ENCODE measurements at regions of chr17 and their contacts with region 1.

Region 1: GRCh38 chr17:58631523-58632323 is 60.1 kb downstream of the TEX14 start:
- DNase-seq: peak; percentile 100
- ATAC-seq: peak; percentile 95
- H3K4me3 ChIP-seq: peak overlapping the region; percentile 64
- H3K27ac ChIP-seq: peak overlapping the region; percentile 78
- H3K4me1 ChIP-seq: peaks cover 13% of the 10 kb centered on the region
- H3K27me3 ChIP-seq: no peaks in the 10 kb centered on the region
- CTCF ChIP-seq: peak; percentile 30; the same call in 1 of the 2 replicates

Region 2: GRCh38 chr17:58587702-58588254 is 43.9 kb before region 1 on chr17:
- CTCF ChIA-PET with region 1: interaction called, 14 read pairs
- POLR2A ChIA-PET with region 1: interaction called, 8 read pairs
- intact Hi-C with region 1: loop called (anchors 1 kb)
- DNase-seq: peak; percentile 84
- ATAC-seq: peak; percentile 97
- H3K4me3 ChIP-seq: no peak overlapping the region
- H3K27ac ChIP-seq: no peak overlapping the region
- H3K4me1 ChIP-seq: no peaks in the 10 kb centered on the region
- H3K27me3 ChIP-seq: 0 out of 2 replicates have a peak, but pooled peaks cover 4% of the 10 kb centered on the region
- CTCF ChIP-seq: peak; percentile 98

Region 3: GRCh38 chr17:58658804-58659713 is 27.3 kb after region 1 on chr17:
- CTCF ChIA-PET with region 1: no interaction called
- POLR2A ChIA-PET with region 1: interaction called, 19 read pairs
- intact Hi-C with region 1: loop called (anchors 1 kb)
- DNase-seq: peak; percentile 98
- ATAC-seq: peak; percentile 91
- H3K4me3 ChIP-seq: peak overlapping the region; percentile 56
- H3K27ac ChIP-seq: peak overlapping the region; percentile 89
- H3K4me1 ChIP-seq: 0 out of 2 replicates have a peak, but pooled peaks cover 8% of the 10 kb centered on the region
- H3K27me3 ChIP-seq: no peaks in the 10 kb centered on the region
- CTCF ChIP-seq: no peak

Region 4: GRCh38 chr17:58692239-58693055 is 60.7 kb after region 1 on chr17 and contains the start of gene RAD51C:
- CTCF ChIA-PET with region 1: no interaction called
- POLR2A ChIA-PET with region 1: no interaction called
- intact Hi-C with region 1: loop called (anchors 5 kb)
- DNase-seq: peak; percentile 94
- ATAC-seq: peak; percentile 99
- H3K4me3 ChIP-seq: peak within 1 kb of the TSS; percentile 76
- H3K27ac ChIP-seq: peak within 1 kb of the TSS; percentile 46
- H3K4me1 ChIP-seq: peaks cover 23% of the 10 kb centered on the region
- H3K27me3 ChIP-seq: no peaks in the 10 kb centered on the region
- CTCF ChIP-seq: no peak
- total RNA-seq, gene RAD51C: 58.9 and 71.1 TPM in 2 replicates

Region 5: GRCh38 chr17:58997756-58998550 is 366.2 kb after region 1 on chr17:
- CTCF ChIA-PET with region 1: no interaction called
- POLR2A ChIA-PET with region 1: interaction called, 3 read pairs
- intact Hi-C with region 1: loop called (anchors 2 kb)
- DNase-seq: peak; percentile 47
- ATAC-seq: peak; percentile 77
- H3K4me3 ChIP-seq: no peak overlapping the region
- H3K27ac ChIP-seq: peak overlapping the region; percentile 15; the same call in 1 of the 2 replicates
- H3K4me1 ChIP-seq: peaks cover 22% of the 10 kb centered on the region
- H3K27me3 ChIP-seq: no peaks in the 10 kb centered on the region
- CTCF ChIP-seq: no peak

Region 6: DNA sequence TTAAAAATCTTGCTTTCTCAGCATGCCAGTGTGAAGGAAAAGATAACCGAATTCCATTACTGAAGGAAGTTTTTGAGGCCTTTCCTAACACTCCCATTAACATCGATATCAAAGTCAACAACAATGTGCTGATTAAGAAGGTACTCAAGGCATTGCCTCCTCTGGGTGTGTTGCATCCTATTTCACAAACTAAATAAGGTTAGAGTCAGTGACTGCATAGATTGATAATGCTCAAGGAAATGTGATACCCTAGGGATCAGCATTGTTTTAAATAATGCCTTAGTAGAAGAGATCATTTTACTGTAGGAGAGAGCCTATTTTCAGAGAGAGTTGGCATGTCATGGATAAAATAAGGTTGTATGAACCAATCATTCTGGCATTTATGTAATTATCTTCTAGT is 625.4 kb after region 1 on chr17:
- CTCF ChIA-PET with region 1: no interaction called
- POLR2A ChIA-PET with region 1: interaction called, 17 read pairs
- intact Hi-C with region 1: no loop called
- DNase-seq: no peak
- ATAC-seq: peak; percentile 53; the same call in 1 of the 2 replicates
- H3K4me3 ChIP-seq: no peak overlapping the region
- H3K27ac ChIP-seq: no peak overlapping the region
- H3K4me1 ChIP-seq: no peaks in the 10 kb centered on the region; the same call in 1 of the 2 replicates
- H3K27me3 ChIP-seq: no peaks in the 10 kb centered on the region
- CTCF ChIP-seq: no peak

Measured in PC-3 (cell line).